HCT116 (cell line): ENCODE measurements at regions of chr4 and their contacts with region 1.

Region 1: DNA sequence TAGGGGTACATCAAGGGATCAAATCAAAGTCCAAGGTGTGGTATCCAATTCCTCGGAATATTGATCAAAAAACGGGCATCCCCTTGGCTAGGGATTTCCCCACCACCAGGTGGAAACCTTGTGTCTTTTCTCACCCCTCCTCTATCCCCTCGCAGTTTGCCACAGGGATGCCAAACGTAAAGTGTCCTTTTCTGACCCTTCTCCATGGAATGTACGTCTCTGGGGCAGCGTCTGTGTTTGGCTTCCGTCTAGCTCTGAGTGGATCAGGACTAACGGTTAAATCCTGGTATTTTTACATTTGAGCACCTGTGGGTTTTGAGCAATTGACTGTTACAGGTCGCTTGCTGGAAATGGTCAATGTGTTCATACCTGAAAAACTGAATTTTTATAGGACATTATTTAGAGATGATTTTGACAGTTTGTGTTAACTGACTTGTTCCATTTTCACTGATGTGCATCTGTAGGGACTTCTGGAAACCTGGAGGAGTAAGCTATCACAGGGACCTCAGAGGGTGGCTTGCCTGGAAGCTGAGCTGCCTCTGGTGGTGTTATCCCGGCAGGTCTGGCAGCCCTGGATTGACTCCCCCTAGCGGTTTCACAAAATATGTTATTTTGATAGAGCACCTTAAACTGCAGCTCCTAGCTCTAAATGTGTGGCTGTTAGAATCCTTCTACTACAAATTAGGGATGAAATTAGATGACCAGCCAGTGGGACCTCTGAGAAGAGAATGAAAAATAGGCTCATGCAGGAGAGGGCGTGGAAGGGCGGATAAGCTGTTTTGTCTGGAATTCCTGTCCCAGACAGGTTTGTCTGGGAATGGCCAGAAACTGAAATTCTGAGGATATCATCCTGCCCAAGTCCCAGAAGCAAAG is 8.8 kb upstream of the MGST2 start:
- DNase-seq: peak; percentile 74
- ATAC-seq: peak; percentile 90
- H3K4me3 ChIP-seq: peak overlapping the region; percentile 26 to 39
- H3K27ac ChIP-seq: no peak overlapping the region
- H3K4me1 ChIP-seq: peaks cover 3 to 22% of the 10 kb centered on the region in 2 experiments; a peak in 3 of 4 replicates
- H3K27me3 ChIP-seq: no peaks in the 10 kb centered on the region
- CTCF ChIP-seq: peak; percentile 77 to 93 (median 92)
- POLR2A ChIP-seq: no peak
- RAD21 ChIP-seq: peak; percentile 72

Region 2: GRCh38 chr4:139603576-139604387 is 53.1 kb before region 1 on chr4:
- CTCF ChIA-PET with region 1: interaction called, 26 read pairs
- POLR2A ChIA-PET with region 1: interaction called, 3 read pairs
- RAD21 ChIA-PET with region 1: interaction called, 3 to 5 read pairs
- intact Hi-C with region 1: no loop called
- DNase-seq: peak; percentile 49
- ATAC-seq: peak; percentile 73
- H3K4me3 ChIP-seq: no peak overlapping the region
- H3K27ac ChIP-seq: no peak overlapping the region
- H3K4me1 ChIP-seq: peaks cover 6 to 18% of the 10 kb centered on the region in 2 experiments; a peak in 3 of 4 replicates
- H3K27me3 ChIP-seq: no peaks in the 10 kb centered on the region
- CTCF ChIP-seq: peak; percentile 67 to 76 (median 69); a peak in 5 of 6 replicates
- POLR2A ChIP-seq: no peak
- RAD21 ChIP-seq: peak; percentile 83

Region 3: DNA sequence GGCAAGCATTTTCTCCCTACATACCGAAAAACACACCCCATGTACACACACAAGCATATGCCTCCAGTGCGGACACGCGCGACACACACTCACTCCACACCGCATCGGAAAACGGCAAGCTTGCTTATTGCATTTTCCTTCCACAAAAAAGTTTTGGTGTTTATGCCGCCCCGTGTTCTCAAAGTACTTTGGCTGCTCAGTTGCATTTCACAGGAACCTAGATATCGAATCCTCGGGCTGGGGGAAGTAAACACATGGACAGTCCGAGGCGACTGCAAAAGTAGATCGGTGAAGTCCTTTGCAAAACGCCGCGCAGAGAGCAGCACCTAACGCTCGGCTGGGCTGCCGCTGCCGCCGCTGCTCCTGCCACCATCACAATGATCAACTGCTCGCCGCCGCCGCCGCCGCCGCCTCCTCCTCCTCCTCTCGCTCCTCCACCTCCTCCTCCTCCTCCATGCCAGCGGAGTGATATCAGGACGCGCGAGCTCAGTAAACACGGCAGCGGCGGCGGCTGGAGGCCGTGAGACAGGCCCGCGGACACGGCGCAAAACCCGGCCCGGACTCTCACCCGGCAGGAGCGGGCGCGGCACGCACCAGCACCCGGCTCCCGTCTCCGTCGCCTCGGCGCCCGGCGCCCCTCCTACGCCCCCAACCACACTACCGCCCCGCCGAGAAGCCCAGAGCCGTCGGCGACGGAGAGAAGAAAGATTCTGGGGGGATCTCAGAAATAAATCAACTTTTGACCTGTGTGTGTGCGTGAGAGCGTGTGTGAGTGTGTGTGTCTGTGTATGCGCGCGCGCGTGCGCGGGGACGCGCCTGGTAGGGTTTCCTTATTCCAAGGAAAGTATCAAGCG is 497.1 kb after region 1 on chr4 and contains the start of gene MAML3:
- CTCF ChIA-PET with region 1: no interaction called
- POLR2A ChIA-PET with region 1: no interaction called
- RAD21 ChIA-PET with region 1: no interaction called
- intact Hi-C with region 1: loop called (anchors 5 kb)
- DNase-seq: peak; percentile 90
- ATAC-seq: peak; percentile 41
- H3K4me3 ChIP-seq: peak within 1 kb of the TSS; percentile 70 to 80
- H3K27ac ChIP-seq: peak within 1 kb of the TSS; percentile 28; the same call in 1 of the 2 replicates
- H3K4me1 ChIP-seq: peaks cover 8 to 30% of the 10 kb centered on the region in 2 experiments
- H3K27me3 ChIP-seq: no peaks in the 10 kb centered on the region
- CTCF ChIP-seq: no peak
- POLR2A ChIP-seq: no peak
- RAD21 ChIP-seq: no peak
- total RNA-seq, gene MAML3: 3.1 TPM

Region 4: DNA sequence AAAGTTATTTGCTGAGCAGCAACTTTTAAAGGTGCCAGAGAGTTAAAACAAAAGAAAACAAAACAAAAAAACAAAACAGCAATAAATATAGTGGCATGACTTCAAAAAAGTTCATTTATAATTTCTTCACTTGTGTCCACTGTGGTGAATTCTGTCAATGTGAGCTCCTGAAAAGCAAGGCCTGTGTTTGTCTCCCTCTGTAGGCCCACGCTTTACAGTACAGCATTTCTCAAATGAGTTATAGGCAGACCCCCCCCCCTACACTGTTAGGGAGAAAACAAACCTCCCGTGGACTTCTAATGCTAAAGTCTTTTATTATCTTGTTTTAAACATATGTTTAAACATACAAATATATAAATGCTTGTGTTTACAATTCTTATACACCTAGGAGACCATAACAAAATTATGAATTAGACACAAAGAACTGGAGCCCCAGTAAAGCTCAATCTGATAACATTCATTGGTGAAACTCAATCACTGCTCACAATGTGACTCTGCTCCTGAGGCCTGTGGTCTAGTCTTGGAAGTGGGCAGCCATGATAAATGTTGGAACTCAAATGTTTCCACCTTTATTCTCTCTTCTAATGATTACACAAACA is 669.6 kb after region 1 on chr4:
- CTCF ChIA-PET with region 1: interaction called, 20 read pairs
- POLR2A ChIA-PET with region 1: no interaction called
- RAD21 ChIA-PET with region 1: no interaction called
- intact Hi-C with region 1: loop called (anchors 1 kb)
- DNase-seq: peak; percentile 33
- ATAC-seq: peak; percentile 93
- H3K4me3 ChIP-seq: no peak overlapping the region
- H3K27ac ChIP-seq: no peak overlapping the region
- H3K4me1 ChIP-seq: no peaks in the 10 kb centered on the region
- H3K27me3 ChIP-seq: no peaks in the 10 kb centered on the region
- CTCF ChIP-seq: peak; percentile 75 to 77 (median 76)
- POLR2A ChIP-seq: no peak
- RAD21 ChIP-seq: peak; percentile 85

Region 5: GRCh38 chr4:140609548-140610425 is 952.9 kb after region 1 on chr4:
- CTCF ChIA-PET with region 1: interaction called, 8 read pairs
- POLR2A ChIA-PET with region 1: no interaction called
- RAD21 ChIA-PET with region 1: interaction called in 1 of 2 experiments, 3 read pairs
- intact Hi-C with region 1: loop called (anchors 1 kb)
- DNase-seq: peak; percentile 41
- ATAC-seq: peak; percentile 98
- H3K4me3 ChIP-seq: no peak overlapping the region
- H3K27ac ChIP-seq: no peak overlapping the region
- H3K4me1 ChIP-seq: 0 out of 4 replicates have a peak, but pooled peaks cover 0 to 5% of the 10 kb centered on the region in 2 experiments
- H3K27me3 ChIP-seq: no peaks in the 10 kb centered on the region
- CTCF ChIP-seq: peak; percentile 41 to 77 (median 65); a peak in 5 of 6 replicates
- POLR2A ChIP-seq: no peak
- RAD21 ChIP-seq: peak; percentile 80